ENCODE measurements at regions of chr1 and their contacts with region 1.

Region 1: DNA sequence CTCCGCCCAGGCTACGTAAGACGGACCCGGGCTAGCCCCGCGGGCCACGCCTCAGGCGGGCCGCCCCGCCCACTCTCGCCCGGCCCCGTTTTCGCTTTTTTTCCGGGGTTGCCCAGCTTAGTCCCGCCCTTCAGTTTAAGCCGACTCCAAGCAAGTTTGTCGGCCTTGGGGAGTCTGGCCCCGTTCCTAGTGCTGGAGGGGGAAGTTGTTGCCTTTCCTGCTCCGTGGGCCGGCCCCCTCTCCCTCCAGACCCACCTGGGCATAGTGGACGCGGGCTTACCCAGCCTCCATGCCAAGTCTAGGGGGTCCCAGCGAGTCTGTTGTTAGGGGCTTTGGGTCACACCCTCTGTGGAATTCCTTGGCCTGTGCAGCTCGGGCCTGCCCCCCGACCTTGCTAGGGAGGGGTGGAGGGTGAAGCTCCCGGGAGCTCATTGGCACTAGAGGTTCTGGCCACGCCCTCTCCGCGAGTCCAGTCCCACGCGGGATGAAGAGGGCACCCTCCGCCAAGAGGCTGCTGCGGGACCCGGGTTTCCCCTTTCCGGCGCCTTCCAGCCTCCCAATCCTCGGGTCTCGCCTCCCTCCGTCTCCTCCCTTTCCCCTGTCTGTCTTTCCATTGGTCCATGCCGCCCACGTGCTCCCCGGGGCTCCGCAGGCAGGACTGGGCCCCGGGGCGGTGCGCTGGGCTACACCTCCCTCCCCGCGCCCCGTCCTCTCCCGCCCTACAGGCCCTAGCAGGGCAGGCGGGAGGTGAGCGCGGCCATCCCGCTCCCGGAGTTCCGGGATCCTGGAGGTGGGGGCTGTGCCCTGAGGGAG is 3.3 kb downstream of the RUSC1 start:
- DNase-seq: peak; percentile 94 to 96
- ATAC-seq: peak; percentile 84 to 86
- H3K4me3 ChIP-seq: peak overlapping the region; percentile 62 to 95 (median 90)
- H3K27ac ChIP-seq: peak overlapping the region; percentile 82 to 96 (median 87)
- H3K4me1 ChIP-seq: peaks cover 16 to 39% of the 10 kb centered on the region in 2 donors
- H3K27me3 ChIP-seq: no peaks in the 10 kb centered on the region
- CTCF ChIP-seq: no peak
- POLR2A ChIP-seq: peak; percentile 55 to 72

Region 2: DNA sequence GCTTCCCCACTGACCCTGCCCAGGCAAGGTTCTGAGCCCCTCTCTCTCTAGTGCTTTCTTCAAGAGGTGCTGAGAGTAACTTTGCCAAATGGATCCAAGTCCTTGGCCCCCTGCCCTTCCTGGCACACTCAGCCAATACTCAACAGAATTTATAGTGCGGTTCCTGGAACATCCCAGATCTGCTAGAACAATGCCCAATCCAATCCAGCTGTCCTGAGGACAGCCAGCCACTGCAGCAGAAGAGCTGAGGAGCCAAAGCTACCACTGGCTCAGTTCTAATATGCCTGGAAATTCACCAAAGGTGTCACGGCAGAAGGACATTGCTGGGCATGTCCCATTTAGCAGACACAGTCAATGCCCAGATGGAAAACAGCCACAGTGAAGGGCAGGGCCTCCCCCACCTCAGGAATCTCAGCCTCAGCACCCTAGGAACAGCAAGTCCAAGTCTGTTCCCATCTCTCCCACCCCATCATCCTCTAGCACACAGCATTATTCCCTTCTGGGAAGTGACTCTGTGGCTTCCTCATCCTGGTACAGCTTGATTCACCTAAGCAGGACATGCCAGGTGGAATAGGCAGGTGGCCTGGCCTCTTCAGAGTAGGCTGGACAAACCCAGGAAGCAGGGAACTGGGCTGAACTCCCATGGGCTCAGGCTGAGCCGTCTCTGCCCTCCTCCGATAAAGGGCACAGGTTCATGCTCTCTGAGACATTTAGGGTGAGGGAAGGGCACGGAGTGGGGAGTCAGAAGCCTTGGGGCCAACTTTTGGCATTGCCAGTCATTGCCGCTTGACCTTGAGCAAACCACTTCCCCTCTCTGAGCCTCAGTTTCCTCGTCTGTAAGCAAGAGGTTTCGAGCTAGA is 412.1 kb before region 1 on chr1:
- in situ Hi-C with region 1: no loop called
- intact Hi-C with region 1: no loop called
- DNase-seq: no peak
- ATAC-seq: no peak
- H3K4me3 ChIP-seq: no peak overlapping the region
- H3K27ac ChIP-seq: peak overlapping the region in 1 of 4 donors; percentile 19
- H3K4me1 ChIP-seq: peaks cover 0 to 11% of the 10 kb centered on the region in 2 donors
- H3K27me3 ChIP-seq: no peaks in the 10 kb centered on the region
- CTCF ChIP-seq: no peak
- POLR2A ChIP-seq: no peak

Region 3: DNA sequence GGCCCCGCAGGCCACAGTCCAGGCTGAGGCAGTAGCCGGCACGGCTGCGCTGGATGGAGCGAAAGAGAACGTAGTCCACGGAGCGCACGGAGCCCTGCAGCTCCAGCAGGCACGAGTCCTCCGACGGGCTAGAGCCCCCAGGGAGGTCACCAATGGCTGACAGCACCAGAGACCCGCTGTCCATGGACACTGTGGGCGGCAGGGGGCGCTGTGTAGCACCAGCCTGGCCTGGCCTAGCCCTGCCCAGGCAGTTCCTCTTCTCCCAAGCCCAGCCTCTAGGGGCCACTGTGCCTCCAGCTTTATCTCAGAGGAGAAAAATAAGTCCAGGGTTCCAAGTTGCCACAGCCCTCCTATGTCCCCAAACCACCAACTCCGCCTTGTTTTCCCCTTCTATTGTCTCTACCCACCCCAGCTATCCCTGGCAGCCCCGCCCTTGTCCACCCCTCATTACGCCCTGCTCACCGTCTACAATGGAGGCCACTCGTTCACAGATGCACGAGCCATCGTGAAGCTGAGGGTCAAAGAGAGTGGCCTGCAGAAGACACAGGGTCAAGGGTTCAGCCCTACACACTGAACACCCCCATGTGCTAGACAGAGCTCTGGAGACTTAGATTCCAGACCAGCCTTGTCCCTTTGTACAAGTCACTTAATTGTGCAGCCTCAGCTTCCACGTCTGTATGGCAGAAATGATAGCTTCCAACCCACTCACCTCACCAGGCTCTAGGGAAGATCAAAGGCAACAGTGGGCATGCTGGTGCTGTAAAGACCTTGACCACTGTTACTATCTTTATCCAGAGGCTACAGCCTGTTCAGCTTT is 73.2 kb before region 1 on chr1:
- in situ Hi-C with region 1: loop called in 1 of 4 experiments (anchors 10 kb)
- intact Hi-C with region 1: loop called (anchors 1 kb)
- DNase-seq: peak; percentile 81 to 88
- ATAC-seq: peak; percentile 69 to 82
- H3K4me3 ChIP-seq: peak overlapping the region in 1 of 4 donors; percentile 16
- H3K27ac ChIP-seq: peak overlapping the region in 2 of 4 donors; percentile 36 to 43
- H3K4me1 ChIP-seq: peaks cover 13 to 27% of the 10 kb centered on the region in 2 donors
- H3K27me3 ChIP-seq: no peaks in the 10 kb centered on the region
- CTCF ChIP-seq: peak; percentile 98 to 100 (median 99)
- POLR2A ChIP-seq: no peak

Region 4: GRCh38 chr1:155282488-155283091 is 41.4 kb before region 1 on chr1:
- in situ Hi-C with region 1: loop called in 1 of 4 experiments (anchors 5 kb)
- intact Hi-C with region 1: loop called (anchors 1 kb)
- DNase-seq: no peak
- ATAC-seq: no peak
- H3K4me3 ChIP-seq: no peak overlapping the region
- H3K27ac ChIP-seq: no peak overlapping the region
- H3K4me1 ChIP-seq: peaks cover 6 to 7% of the 10 kb centered on the region in 2 donors
- H3K27me3 ChIP-seq: no peaks in the 10 kb centered on the region
- CTCF ChIP-seq: no peak
- POLR2A ChIP-seq: no peak

Region 5: GRCh38 chr1:155339515-155340097 is 15.6 kb after region 1 on chr1:
- in situ Hi-C with region 1: no loop called
- intact Hi-C with region 1: no loop called
- DNase-seq: no peak
- ATAC-seq: no peak
- H3K4me3 ChIP-seq: no peak overlapping the region
- H3K27ac ChIP-seq: no peak overlapping the region
- H3K4me1 ChIP-seq: no peaks in the 10 kb centered on the region
- H3K27me3 ChIP-seq: no peaks in the 10 kb centered on the region
- CTCF ChIP-seq: no peak
- POLR2A ChIP-seq: no peak

Region 6: GRCh38 chr1:155591770-155592169 is 267.8 kb after region 1 on chr1:
- in situ Hi-C with region 1: no loop called
- intact Hi-C with region 1: loop called (anchors 5 kb)
- DNase-seq: no peak
- ATAC-seq: peak; percentile 63 to 74
- H3K4me3 ChIP-seq: no peak overlapping the region
- H3K27ac ChIP-seq: no peak overlapping the region
- H3K4me1 ChIP-seq: no peaks in the 10 kb centered on the region
- H3K27me3 ChIP-seq: no peaks in the 10 kb centered on the region
- CTCF ChIP-seq: peak; percentile 27 to 62 (median 43)
- POLR2A ChIP-seq: no peak

Measured in gastrocnemius medialis (tissue), 4 donors.